Activated T-helper 1 cell treated with anti-CD3 and anti-CD28 coated beads, Interleukin-12 subunit alpha, Interleukin-12 subunit beta, Interleukin-2, Interleukin-4 antibody, amounts not matched to agents 30 ng/mL and 10 ng/mL and 1 ng/mL, durations not matched to agents 14 hours and 24 hours and 36 hours (primary cell): ENCODE measurements at regions of chr12 and their contacts with region 1.

Region 1: DNA sequence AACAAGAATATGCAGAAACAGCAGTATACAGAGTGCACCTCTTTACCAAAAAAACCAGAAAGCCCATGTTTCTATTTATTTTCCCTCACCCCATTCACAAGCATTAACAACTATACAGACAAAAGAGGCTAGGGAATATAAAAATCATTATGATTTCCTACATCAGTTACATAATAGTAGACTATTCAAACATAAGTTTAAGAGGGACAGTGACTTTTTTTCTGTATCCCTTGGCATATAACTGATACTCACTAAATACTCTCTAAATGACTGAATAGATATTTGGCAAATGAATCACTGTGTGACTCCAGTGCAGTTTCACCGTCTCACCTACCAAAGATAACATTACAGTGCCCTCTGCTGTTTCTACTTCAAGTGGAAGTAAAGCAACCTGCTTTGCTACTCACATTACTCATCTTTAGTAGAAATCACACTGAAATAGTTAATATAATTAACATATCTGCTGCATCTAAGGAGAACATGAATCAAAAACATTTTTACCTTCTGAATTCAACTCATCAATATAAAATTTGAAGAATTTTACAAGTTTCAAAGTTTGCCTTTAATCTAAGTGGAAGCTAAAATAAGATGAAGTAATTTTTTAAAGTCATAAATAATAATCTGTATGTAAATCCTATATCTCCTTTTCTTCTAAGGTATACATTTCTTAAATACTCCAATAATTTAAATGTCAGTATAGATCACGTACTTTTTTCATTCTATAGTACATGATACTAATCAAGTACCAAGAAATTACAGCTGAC is 103.8 kb downstream of the OSBPL8 start:
- DNase-seq: peak; percentile 5
- H3K4me3 Mint-ChIP-seq: no peak overlapping the region
- H3K27ac Mint-ChIP-seq: no peak overlapping the region
- H3K4me1 Mint-ChIP-seq: peaks cover 15% of the 10 kb centered on the region
- H3K27me3 Mint-ChIP-seq: no peaks in the 10 kb centered on the region

Region 2: DNA sequence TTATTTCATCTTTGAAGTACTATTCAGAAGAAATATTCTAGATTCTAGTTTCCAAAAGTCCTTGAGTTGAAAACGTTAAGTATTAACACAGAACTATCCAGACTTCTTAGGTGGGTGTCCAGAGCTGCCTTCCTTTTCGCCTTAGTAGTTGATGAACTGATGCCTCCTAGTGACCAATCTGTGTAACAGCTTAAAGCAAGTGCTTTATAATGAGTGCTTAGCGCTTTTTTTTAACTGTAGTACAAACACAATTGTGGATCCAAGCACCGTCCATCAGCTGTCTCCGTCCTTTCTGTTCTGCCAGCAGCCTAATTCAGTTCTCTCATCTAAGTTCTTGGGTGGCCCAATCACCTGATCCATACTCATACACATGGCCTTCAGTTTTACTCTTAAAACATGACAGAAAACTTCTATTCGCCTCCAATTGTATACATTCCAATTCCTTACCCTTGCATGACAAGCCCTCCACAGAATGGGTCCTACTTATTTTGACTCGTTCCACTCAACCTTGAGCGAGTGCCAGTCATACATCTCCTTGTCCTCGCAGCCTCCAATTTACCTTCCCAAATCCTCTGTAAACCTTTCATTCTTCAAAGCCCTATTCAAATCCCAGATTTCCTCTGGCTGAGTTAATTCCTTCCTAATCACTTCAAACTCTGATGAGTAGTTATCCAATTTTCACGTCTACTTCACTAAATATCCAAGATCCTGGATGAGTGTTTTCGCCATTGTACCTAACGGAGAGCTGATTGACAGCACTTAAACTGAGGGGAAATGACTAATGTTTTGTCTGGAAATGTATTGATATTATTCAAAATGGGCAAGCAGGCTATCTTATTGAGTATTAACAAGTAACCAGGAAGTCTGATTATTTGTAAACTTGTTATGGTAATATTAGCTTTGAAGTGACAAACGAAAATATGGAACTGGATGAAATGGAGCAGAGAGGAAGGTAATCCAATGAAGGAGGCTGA is 418.3 kb before region 1 on chr12:
- intact Hi-C with region 1: loop called (anchors 2 kb)
- DNase-seq: peak; percentile 26
- H3K4me3 Mint-ChIP-seq: no peak overlapping the region
- H3K27ac Mint-ChIP-seq: peak overlapping the region; percentile 0
- H3K4me1 Mint-ChIP-seq: peaks cover 24% of the 10 kb centered on the region
- H3K27me3 Mint-ChIP-seq: no peaks in the 10 kb centered on the region

Region 3: DNA sequence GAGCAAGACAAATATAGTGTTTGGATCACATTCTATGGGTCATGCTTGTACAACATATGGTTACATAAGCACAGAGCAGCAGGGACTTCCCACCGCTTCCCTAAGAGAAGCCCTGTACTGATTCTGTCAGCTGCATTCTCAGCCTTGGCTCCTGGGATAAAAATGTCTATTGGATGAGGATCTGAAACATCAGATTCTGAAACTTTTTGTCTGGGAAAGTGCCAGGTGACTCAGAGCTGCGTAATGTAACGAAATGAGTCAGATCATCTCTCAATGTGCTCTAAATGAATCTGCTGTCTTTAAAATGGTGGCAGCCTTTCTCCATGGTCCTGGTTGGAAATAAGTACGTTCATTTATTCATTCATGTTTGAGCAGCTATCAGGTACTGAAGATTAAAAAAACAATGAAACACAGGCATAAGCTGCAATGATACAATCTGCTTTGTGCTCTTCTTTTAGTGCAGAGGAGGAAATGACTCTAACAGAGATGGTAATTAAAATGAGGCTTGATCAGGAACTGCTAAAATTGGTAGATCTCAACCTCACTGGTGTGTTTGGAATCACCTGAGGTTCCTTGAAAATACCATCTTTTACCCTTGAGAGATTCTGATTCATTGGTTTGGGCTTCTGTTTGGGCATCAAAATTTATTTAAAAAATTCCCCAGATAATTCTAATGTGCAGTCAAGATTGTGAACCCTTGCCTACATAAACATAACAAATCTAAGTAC is 272.1 kb before region 1 on chr12:
- intact Hi-C with region 1: loop called (anchors 10 kb)
- DNase-seq: no peak
- H3K4me3 Mint-ChIP-seq: no peak overlapping the region
- H3K27ac Mint-ChIP-seq: no peak overlapping the region
- H3K4me1 Mint-ChIP-seq: peaks cover 14% of the 10 kb centered on the region
- H3K27me3 Mint-ChIP-seq: peaks cover 36% of the 10 kb centered on the region

Region 4: GRCh38 chr12:76504606-76505005 is 48.8 kb after region 1 on chr12:
- intact Hi-C with region 1: no loop called
- DNase-seq: no peak
- H3K4me3 Mint-ChIP-seq: no peak overlapping the region
- H3K27ac Mint-ChIP-seq: no peak overlapping the region
- H3K4me1 Mint-ChIP-seq: no peaks in the 10 kb centered on the region
- H3K27me3 Mint-ChIP-seq: no peaks in the 10 kb centered on the region

Region 5: DNA sequence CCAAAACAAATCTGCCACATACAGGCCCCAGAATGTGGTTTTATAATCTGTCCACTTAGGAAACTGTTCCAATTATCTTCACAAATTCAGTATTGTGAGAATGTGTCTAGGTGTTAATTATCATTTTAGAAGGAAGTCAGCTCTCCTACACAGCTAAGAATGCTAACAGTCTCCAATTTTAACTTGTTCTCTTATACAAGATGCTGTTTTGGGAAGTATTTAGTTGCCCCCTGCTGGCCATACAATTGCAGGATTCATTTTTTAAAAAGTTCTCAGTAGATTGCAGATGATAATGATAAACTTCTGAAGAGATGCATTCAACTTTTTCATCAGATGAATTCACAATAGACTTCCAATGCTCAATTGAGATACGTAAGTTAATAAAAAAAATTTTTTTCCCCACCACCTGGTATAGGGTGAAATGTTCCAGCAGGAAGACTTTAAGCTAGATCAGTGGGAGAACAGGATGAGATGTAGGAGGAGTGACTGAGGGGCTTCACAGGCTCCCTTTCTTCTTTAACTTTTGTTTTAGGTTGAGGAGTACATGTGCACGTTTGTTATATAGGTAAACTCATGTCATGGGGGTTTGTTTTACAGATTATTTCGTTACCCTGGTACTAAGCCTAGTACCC is 131.1 kb after region 1 on chr12:
- intact Hi-C with region 1: loop called (anchors 1 kb)
- DNase-seq: peak; percentile 7
- H3K4me3 Mint-ChIP-seq: no peak overlapping the region
- H3K27ac Mint-ChIP-seq: no peak overlapping the region
- H3K4me1 Mint-ChIP-seq: peaks cover 21% of the 10 kb centered on the region
- H3K27me3 Mint-ChIP-seq: peaks cover 2% of the 10 kb centered on the region

Region 6: GRCh38 chr12:76952995-76953394 is 497.2 kb after region 1 on chr12:
- intact Hi-C with region 1: no loop called
- DNase-seq: no peak
- H3K4me3 Mint-ChIP-seq: no peak overlapping the region
- H3K27ac Mint-ChIP-seq: no peak overlapping the region
- H3K4me1 Mint-ChIP-seq: no peaks in the 10 kb centered on the region
- H3K27me3 Mint-ChIP-seq: peaks cover 5% of the 10 kb centered on the region